ENCODE measurements at regions of chr9 and their contacts with region 1.

Region 1: DNA sequence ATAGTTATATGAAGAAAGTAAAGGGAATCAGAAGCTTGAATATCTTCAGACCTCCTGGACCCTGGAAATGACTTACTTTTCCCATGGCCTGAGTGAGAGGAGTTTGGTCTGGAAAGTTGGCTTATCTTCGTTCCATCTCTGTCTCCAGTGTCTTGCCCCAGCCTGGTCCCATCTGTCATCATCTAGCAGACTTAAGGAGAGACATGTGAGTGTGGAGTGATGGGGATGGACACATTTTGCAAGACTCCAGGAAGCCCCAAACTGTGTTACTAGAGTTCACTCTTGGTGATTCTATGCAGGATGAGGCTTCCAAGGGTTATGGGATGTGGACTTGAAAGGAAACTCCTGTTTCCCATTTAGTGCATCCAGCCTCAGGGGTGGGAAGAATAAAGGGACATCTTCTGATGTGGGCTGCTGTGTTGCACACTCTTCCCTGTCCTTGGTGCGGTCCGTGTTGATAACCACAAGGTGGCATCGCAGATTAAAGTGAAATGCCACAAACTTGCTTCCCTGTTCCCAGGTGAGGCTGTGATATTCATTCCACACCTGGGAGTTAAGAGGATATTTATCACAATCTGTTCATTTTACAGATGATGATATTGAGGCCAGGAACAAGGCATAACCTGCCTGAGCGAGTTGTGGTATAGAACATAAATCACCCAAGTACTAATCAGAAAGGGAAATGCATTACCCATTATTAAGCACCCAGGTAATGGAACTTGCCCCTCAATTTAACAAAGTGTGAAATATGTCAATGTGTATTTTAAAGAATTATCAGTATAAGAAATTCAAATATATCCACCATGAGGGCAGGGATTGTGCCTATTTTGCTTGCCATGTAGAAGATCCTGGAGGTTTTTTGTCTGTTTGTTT is 269.9 kb upstream of the PAPPA start:
- DNase-seq: peak; percentile 69
- H3K4me3 ChIP-seq: no peak overlapping the region
- H3K27ac ChIP-seq: peak overlapping the region; percentile 52
- H3K4me1 ChIP-seq: peaks cover 81% of the 10 kb centered on the region
- H3K27me3 ChIP-seq: no peaks in the 10 kb centered on the region
- CTCF ChIP-seq: peak; percentile 87

Region 2: DNA sequence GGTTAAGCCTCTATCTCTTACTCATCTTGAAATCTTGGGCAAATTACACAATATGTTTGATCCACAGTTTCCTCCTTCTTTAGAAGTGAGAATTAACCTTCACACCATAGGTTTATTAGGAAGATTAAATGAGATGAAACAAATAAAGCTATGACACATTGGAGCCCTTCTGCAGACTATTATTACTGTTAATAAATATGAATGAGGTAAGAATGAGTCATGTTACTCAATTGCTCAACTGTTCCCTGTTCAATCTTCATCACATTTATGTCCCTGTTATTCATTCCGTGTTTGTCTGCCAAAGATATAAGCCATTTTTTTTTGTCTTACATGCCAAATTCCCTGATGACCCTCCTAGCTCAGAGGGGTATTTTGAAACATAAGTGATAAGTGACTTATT is 217.8 kb after region 1 on chr9:
- CTCF ChIA-PET with region 1: no interaction called
- POLR2A ChIA-PET with region 1: no interaction called
- intact Hi-C with region 1: no loop called
- DNase-seq: peak; percentile 50
- H3K4me3 ChIP-seq: no peak overlapping the region
- H3K27ac ChIP-seq: no peak overlapping the region
- H3K4me1 ChIP-seq: peaks cover 13% of the 10 kb centered on the region
- H3K27me3 ChIP-seq: no peaks in the 10 kb centered on the region
- CTCF ChIP-seq: no peak

Region 3: GRCh38 chr9:116275418-116276195 is 391.9 kb after region 1 on chr9:
- CTCF ChIA-PET with region 1: no interaction called
- POLR2A ChIA-PET with region 1: no interaction called
- intact Hi-C with region 1: loop called (anchors 10 kb)
- DNase-seq: peak; percentile 92
- H3K4me3 ChIP-seq: no peak overlapping the region
- H3K27ac ChIP-seq: peak overlapping the region; percentile 58
- H3K4me1 ChIP-seq: peaks cover 36% of the 10 kb centered on the region
- H3K27me3 ChIP-seq: no peaks in the 10 kb centered on the region
- CTCF ChIP-seq: no peak

Region 4: GRCh38 chr9:116494815-116495634 is 611.3 kb after region 1 on chr9:
- CTCF ChIA-PET with region 1: no interaction called
- POLR2A ChIA-PET with region 1: no interaction called
- intact Hi-C with region 1: loop called (anchors 10 kb)
- DNase-seq: peak; percentile 44
- H3K4me3 ChIP-seq: no peak overlapping the region
- H3K27ac ChIP-seq: no peak overlapping the region
- H3K4me1 ChIP-seq: peaks cover 6% of the 10 kb centered on the region
- H3K27me3 ChIP-seq: no peaks in the 10 kb centered on the region
- CTCF ChIP-seq: peak; percentile 78

Region 5: DNA sequence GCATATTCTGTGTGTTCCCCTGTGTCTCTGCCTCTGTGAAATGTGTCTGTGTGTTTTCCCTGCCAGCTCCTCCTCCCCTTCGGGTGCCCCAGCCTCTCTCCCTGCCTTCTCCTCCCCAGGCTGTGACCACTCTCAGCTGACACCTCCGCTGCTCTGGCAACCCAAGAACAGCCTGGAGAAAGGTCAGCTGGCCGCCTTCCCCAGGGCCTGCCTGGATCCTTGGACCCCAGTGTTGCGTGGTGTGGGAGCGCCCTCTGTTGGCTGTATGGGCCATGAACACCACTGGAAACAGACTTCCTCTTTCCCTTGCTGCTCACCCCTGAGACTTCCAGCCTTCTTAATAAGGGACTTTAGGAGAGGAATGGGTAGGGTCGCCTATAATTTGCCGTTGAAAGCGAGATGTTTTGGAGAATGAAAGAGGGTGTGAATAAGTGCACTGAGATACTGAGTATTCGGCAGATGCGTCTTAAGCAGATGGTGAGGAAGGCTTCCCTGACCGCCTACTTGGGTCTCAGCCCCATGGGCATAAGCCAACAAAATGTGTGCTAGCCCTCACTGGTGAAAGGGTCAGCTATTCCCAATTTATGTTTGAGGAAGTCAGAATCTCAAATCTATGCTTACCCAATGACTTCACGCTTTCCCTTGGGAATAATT is 688.5 kb after region 1 on chr9:
- CTCF ChIA-PET with region 1: no interaction called
- POLR2A ChIA-PET with region 1: no interaction called
- intact Hi-C with region 1: loop called (anchors 5 kb)
- DNase-seq: peak; percentile 82
- H3K4me3 ChIP-seq: no peak overlapping the region
- H3K27ac ChIP-seq: peak overlapping the region; percentile 58
- H3K4me1 ChIP-seq: peaks cover 21% of the 10 kb centered on the region
- H3K27me3 ChIP-seq: no peaks in the 10 kb centered on the region
- CTCF ChIP-seq: peak; percentile 99

Measured in A673 (cell line).